WTC11 (cell line): ENCODE measurements at regions of chr10 and their contacts with region 1.

Region 1: DNA sequence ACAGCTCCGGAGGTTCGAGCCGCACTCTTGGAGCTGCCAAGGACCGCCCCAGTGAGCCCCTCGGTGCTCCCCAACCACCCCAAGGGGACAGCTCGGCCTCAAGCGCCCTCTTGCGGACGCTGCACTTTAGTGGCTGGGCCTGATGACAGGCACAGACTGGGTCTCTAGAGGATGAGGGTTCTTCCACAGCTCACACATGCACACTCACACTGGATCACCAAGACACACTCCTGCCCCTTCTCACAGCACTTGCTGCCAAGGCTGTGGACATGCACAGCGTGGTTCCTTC is 2.1 kb downstream of the RET start:
- DNase-seq: peak; percentile 88
- ATAC-seq: peak; percentile 54
- H3K4me3 Mint-ChIP-seq: 0 out of 2 replicates have a peak overlapping the region, but pooled peaks have one; percentile 73
- H3K27ac Mint-ChIP-seq: no peak overlapping the region
- H3K4me1 Mint-ChIP-seq: peaks cover 14% of the 10 kb centered on the region
- H3K27me3 Mint-ChIP-seq: peaks cover 35% of the 10 kb centered on the region
- CTCF ChIP-seq: peak; percentile 69

Region 2: DNA sequence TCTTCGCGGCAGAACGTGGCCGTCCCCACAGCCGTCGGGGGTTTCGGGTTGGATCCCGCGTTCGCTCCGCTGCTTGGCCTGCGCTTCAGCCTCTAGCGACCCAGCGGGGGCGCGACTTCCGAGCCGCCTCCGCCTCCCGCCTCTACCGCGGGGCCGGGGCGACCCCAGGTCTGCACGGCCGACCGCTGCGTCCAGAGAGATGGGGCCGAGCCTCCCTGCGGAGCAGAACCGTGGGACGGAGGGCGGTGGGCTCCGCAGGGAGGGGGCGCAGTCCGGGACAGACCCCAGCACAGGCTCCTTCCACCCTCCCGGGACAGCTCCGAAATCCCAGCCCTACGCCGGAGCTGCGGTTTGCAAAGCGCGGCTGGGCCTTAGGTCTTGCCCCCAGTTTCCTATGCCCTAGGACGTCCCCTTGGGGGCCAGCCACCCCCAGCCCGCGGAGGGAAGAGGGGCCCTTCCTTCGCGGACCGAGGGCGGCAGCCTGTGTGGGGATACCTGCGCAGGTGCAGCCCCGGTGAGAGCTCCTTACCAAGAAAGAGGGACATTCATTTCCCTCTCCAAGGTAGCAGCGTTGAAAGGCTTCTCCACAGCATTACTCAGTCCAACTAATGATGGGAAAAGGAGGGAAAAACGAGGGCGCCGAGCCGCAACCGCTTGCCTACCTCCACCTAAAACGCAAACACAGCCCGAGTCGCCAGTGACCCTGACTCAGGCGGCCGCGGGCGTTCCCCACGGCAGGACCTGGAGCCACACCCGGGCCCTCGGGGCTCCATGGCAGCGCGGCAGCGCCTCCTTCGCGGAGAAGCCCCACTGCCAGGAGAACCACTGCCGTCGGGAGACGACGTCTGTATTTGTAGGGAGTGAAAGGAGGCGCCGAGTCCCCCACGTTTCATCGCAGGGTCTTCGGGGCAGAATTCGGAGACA is 180.6 kb before region 1 on chr10:
- CTCF ChIA-PET with region 1: interaction called, 10 read pairs
- POLR2A ChIA-PET with region 1: no interaction called
- DNase-seq: peak; percentile 50
- ATAC-seq: peak; percentile 63
- H3K4me3 Mint-ChIP-seq: peak overlapping the region; percentile 58
- H3K27ac Mint-ChIP-seq: no peak overlapping the region
- H3K4me1 Mint-ChIP-seq: peaks cover 15% of the 10 kb centered on the region
- H3K27me3 Mint-ChIP-seq: peaks cover 62% of the 10 kb centered on the region
- CTCF ChIP-seq: no peak

Region 3: DNA sequence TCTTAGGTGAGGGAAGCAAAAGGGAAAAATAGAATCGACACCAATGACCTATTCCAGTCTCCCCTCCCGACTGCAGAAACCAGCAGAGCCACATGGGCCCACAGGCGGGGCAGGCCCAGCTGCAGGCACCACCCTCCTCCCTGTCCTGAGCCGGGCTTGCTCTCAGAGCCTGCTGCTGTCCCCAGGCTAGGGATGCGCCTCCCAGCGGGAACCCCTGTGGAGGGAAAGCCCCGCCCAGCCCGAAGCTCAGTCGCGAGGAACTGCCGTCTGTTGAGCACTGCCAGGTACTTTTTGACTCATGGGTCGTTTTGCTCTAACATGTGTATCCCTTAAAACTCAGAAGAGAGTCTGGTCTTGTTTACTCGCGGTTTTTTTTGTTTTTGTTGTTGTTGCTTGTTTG is 126.6 kb before region 1 on chr10:
- CTCF ChIA-PET with region 1: interaction called, 12 read pairs
- POLR2A ChIA-PET with region 1: no interaction called
- DNase-seq: peak; percentile 87
- ATAC-seq: peak; percentile 90
- H3K4me3 Mint-ChIP-seq: peak overlapping the region; percentile 66
- H3K27ac Mint-ChIP-seq: peak overlapping the region; percentile 23
- H3K4me1 Mint-ChIP-seq: peaks cover 20% of the 10 kb centered on the region
- H3K27me3 Mint-ChIP-seq: peaks cover 11% of the 10 kb centered on the region
- CTCF ChIP-seq: no peak

Region 4: DNA sequence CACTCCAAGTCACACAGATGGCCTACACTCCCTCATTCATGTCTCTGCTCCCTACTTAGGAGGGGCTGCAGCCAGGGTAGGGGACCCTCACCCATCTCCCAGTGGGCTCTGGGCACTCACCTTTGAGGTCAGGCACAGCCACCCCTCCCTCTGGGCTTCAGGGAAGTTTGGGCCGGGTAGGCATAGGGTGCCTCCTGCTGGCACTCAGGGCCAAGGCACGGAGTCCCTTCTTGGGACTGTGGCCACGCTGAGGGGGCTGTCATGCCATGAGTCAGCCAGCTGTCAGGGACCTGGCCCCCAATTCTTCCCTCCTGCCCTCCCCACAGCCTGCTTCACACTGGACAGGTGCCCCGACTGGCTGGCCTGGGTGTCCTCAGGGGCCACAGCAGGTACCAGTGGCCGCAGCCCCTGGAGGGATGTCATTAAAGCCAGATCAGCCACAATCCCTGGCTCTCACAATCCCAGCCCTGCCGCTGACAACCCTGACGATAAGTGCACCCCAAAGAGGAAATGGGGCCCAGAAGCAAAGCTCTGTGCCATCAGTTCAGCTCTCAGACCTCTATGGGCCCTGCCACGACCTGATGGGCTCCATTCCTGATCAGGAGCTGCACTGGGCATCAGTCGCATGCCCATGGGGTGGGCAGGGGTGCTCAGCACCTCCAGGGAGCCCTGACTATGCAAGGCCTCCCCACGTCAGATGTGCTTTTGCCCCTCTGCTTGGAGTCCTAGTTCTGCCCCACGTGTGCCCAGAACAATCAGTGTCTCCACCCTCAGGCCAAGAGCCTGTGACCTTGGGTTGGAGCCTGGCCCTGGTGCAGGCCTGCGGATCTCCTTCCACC is 36.2 kb before region 1 on chr10:
- CTCF ChIA-PET with region 1: interaction called, 21 read pairs
- POLR2A ChIA-PET with region 1: no interaction called
- DNase-seq: peak; percentile 56
- ATAC-seq: peak; percentile 46
- H3K4me3 Mint-ChIP-seq: no peak overlapping the region
- H3K27ac Mint-ChIP-seq: no peak overlapping the region
- H3K4me1 Mint-ChIP-seq: peaks cover 16% of the 10 kb centered on the region
- H3K27me3 Mint-ChIP-seq: no peaks in the 10 kb centered on the region; the same call in 1 of the 2 replicates
- CTCF ChIP-seq: no peak

Region 5: GRCh38 chr10:43093423-43094076 is 14.6 kb after region 1 on chr10:
- CTCF ChIA-PET with region 1: interaction called, 24 read pairs
- POLR2A ChIA-PET with region 1: no interaction called
- DNase-seq: peak; percentile 42
- ATAC-seq: peak; percentile 87
- H3K4me3 Mint-ChIP-seq: no peak overlapping the region
- H3K27ac Mint-ChIP-seq: no peak overlapping the region
- H3K4me1 Mint-ChIP-seq: peaks cover 23% of the 10 kb centered on the region
- H3K27me3 Mint-ChIP-seq: no peaks in the 10 kb centered on the region
- CTCF ChIP-seq: no peak

Region 6: DNA sequence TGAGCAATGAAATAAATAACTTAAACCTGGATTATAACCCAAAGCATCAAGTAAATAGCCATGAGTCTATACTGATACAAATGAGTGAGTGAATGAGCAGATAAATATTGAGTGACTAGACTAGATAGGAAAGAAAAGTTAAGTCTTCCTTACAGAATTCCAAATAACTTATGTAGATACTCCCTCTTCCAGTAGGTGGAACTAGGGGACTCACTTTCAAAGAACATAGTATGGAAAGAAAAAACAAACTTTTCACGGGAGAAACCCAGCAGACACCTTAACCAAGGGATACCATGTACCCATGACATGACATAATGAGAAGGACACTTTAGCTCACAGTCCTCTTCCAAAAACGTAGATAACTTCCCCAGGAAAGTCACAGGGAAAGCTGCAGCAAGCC is 91.6 kb after region 1 on chr10:
- CTCF ChIA-PET with region 1: no interaction called
- POLR2A ChIA-PET with region 1: no interaction called
- DNase-seq: no peak
- ATAC-seq: peak; percentile 32; the same call in 1 of the 2 replicates
- H3K4me3 Mint-ChIP-seq: no peak overlapping the region
- H3K27ac Mint-ChIP-seq: no peak overlapping the region
- H3K4me1 Mint-ChIP-seq: peaks cover 5% of the 10 kb centered on the region
- H3K27me3 Mint-ChIP-seq: no peaks in the 10 kb centered on the region
- CTCF ChIP-seq: no peak